ENCODE measurements at regions of chr11 and their contacts with region 1.

Region 1: GRCh38 chr11:69115586-69116560 is 39.9 kb upstream of the SMIM38 start:
- DNase-seq: no peak
- H3K4me3 ChIP-seq: no peak overlapping the region
- H3K27ac ChIP-seq: no peak overlapping the region
- H3K27me3 ChIP-seq: no peaks in the 10 kb centered on the region
- CTCF ChIP-seq: no peak

Region 2: GRCh38 chr11:69238573-69239351 is 122.9 kb after region 1 on chr11:
- in situ Hi-C with region 1: loop called (anchors 10 kb)
- DNase-seq: no peak
- H3K4me3 ChIP-seq: no peak overlapping the region
- H3K27ac ChIP-seq: no peak overlapping the region
- H3K27me3 ChIP-seq: no peaks in the 10 kb centered on the region
- CTCF ChIP-seq: no peak